ENCODE measurements at regions of chr3 and their contacts with region 1.

Region 1: GRCh38 chr3:126287536-126288241 is 69.5 kb downstream of the KLF15 start:
- DNase-seq: peak; percentile 86
- H3K4me3 ChIP-seq: peak overlapping the region; percentile 66
- H3K27ac ChIP-seq: peak overlapping the region; percentile 83
- H3K4me1 ChIP-seq: peaks cover 59% of the 10 kb centered on the region
- CTCF ChIP-seq: no peak

Region 2: DNA sequence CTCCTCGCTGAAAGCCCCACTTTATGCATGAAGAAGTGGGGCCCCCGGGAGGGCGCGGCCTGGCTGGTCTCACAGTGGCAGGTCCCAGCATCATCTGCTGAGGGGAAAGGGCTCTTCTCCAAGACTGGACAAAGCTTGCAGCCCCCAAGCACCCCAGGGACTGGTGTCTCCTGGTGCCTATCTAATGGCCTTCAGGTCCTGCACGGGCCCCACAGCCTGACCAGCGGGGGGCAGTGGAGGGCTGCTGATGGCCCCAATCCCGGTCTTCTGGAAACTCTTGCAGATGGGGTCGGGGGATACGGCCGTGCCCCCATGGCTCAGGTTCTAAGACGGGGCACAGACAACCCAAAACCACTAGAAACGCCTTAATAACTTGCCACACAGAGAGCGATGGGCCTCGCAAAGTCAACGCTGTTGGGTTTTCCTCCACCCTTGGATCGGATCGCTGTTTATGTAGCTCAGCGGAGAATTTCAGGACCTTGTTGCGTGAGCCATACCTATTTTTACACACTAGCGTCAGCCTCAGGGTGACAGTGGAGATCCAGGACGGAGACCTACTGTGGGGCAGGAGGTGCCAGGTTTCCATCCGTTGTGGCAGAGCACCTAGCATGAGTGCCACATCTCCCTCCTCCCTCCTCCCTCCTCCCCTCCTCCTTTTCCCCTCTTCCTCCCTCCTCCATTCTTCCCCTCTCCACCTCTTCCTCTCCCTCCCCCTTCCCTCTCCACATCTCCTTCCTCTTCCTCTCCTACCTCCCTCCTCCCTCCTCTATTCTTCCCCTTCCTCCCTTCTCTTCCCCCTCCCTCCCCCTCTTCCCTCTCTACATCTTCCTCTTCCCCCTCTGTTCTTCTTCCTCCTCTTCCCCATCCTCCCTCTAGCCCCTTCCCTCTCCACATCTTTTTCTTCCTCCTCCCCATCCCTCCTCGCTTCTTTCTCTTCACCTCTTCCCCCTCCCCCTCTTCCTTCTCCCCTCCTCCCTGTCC is 28.0 kb before region 1 on chr3:
- CTCF ChIA-PET with region 1: interaction called, 4 read pairs
- POLR2A ChIA-PET with region 1: interaction called, 3 read pairs
- intact Hi-C with region 1: loop called (anchors 1 kb)
- DNase-seq: peak; percentile 35
- H3K4me3 ChIP-seq: no peak overlapping the region
- H3K27ac ChIP-seq: peak overlapping the region; percentile 73
- H3K4me1 ChIP-seq: peaks cover 37% of the 10 kb centered on the region
- CTCF ChIP-seq: peak; percentile 73

Region 3: DNA sequence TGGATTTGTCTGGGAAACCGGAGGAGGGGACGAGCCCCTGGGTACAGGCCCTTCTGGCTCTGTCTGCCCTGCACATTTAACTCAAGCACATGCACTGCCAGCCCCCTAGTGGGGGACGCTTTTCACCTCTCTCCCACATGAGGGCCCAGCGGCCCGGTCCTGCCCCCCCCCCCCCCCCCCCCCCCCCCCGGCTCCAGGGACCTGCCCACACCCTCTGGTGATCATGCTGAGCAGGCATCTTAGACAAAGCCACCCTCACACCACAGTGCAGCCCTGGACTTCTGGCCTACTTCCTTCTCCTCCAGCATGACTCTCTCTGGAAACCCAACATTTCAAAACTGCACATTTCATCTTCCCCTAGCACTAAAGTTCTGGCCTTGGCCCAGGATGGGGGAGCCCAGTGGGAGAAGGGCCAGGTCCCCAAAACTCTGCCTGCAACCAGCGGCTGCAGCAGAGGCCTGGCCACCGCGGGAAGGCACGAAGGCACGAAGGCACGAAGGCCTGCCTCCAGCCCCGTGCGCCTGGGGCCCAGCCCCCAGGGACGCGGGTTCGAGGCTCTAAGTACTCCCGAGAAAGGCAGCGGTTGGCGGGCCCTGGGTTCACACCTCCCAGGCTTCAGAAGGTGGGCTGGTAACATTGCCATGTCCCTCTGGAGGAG is 55.4 kb after region 1 on chr3:
- CTCF ChIA-PET with region 1: no interaction called
- POLR2A ChIA-PET with region 1: no interaction called
- intact Hi-C with region 1: no loop called
- DNase-seq: no peak
- H3K4me3 ChIP-seq: no peak overlapping the region
- H3K27ac ChIP-seq: no peak overlapping the region
- H3K4me1 ChIP-seq: no peaks in the 10 kb centered on the region
- CTCF ChIP-seq: no peak

Region 4: DNA sequence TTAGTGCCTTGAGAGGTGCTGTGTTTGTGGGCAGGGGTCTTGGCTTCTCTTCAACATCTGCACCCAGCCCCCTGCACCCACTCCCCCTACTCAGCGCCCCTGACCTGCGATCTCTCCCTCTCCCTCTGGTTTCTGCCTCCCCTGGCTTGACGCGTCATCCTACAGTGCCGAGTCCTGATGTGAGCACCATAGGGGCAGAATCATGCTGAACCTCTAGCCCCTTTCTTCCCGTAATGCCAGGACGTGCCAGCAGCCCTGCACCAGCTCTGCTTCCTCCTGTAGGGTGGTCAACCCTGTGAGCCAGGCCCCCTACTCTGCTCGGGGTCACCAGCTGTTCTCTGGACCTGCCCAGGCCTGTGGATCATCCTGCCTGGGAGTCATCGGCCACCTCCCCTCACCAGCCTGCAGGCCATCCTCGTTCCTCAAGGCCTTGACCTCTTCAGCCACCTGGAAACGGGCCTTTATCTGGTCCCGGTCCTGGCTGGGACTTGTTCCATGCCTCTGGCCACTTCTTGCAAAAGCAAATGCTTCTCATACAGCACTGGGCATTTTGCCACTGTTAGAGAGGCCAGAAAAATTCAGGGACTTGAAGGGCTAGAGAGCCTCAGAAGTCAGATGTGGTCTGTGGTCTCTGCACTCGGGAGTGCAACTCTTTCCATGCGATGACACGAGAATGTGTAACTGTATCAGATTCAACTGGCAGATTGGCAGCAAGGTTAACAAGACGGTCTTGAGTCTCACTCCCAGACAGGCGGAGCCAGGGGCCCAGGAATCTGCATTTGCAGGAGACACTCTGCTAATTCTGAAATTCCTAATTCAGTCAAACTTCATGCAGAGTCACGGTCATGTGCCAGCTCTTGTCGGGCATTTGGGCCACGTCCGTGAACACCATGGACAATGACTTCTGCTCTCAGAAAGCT is 86.3 kb after region 1 on chr3:
- CTCF ChIA-PET with region 1: no interaction called
- POLR2A ChIA-PET with region 1: no interaction called
- intact Hi-C with region 1: no loop called
- DNase-seq: no peak
- H3K4me3 ChIP-seq: no peak overlapping the region
- H3K27ac ChIP-seq: no peak overlapping the region
- H3K4me1 ChIP-seq: no peaks in the 10 kb centered on the region
- CTCF ChIP-seq: no peak

Region 5: GRCh38 chr3:126475413-126476114 is 187.9 kb after region 1 on chr3 and contains the start of gene ZXDC:
- CTCF ChIA-PET with region 1: no interaction called
- POLR2A ChIA-PET with region 1: interaction called, 3 read pairs
- intact Hi-C with region 1: loop called (anchors 10 kb)
- DNase-seq: peak; percentile 94
- H3K4me3 ChIP-seq: peak within 1 kb of the TSS; percentile 76
- H3K27ac ChIP-seq: peak within 1 kb of the TSS; percentile 34
- H3K4me1 ChIP-seq: peaks cover 35% of the 10 kb centered on the region
- CTCF ChIP-seq: peak; percentile 45; the same call in 1 of the 2 replicates
- total RNA-seq, gene ZXDC: 26.6 and 34.9 TPM in 2 replicates